ENCODE measurements at regions of chrX and their contacts with region 1.

Region 1: DNA sequence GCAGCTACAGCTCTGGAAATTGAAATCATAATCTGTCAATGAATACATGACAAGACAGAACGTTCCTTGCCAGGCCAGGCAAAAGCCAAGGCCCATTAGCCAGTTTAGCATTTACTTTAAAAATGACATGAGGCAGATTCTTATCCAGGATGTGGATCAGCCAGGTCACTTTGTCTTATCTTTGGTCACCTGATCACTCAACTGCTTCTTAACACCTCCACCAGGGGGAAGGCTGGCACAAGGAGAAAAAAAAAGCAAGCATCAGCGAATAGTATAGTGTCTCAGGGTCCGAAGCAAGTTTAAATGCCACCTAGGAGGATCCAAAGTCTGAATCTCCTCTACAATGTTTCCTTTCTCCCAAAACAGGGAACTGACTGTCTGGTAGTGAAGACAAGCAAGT is 18.8 kb downstream of the ATP1B4 start:
- DNase-seq: peak; percentile 67
- ATAC-seq: peak; percentile 39
- H3K4me3 ChIP-seq: no peak overlapping the region
- H3K4me3 Mint-ChIP-seq: no peak overlapping the region
- H3K27ac ChIP-seq: no peak overlapping the region
- H3K27ac Mint-ChIP-seq: no peak overlapping the region
- H3K4me1 ChIP-seq: peaks cover 0 to 4% of the 10 kb centered on the region in 2 donors
- H3K4me1 Mint-ChIP-seq: peaks cover 2% of the 10 kb centered on the region
- H3K27me3 ChIP-seq: no peaks in the 10 kb centered on the region
- H3K27me3 Mint-ChIP-seq: peaks cover 7% of the 10 kb centered on the region
- CTCF ChIP-seq: peak; percentile 63

Region 2: GRCh38 chrX:120365320-120365719 is 15.4 kb before region 1 on chrX:
- CTCF ChIA-PET with region 1: no interaction called
- POLR2A ChIA-PET with region 1: no interaction called
- intact Hi-C with region 1: no loop called
- DNase-seq: peak; percentile 35
- ATAC-seq: no peak
- H3K4me3 ChIP-seq: no peak overlapping the region
- H3K4me3 Mint-ChIP-seq: no peak overlapping the region
- H3K27ac ChIP-seq: no peak overlapping the region
- H3K27ac Mint-ChIP-seq: no peak overlapping the region
- H3K4me1 ChIP-seq: peaks cover 0 to 2% of the 10 kb centered on the region in 2 donors
- H3K4me1 Mint-ChIP-seq: peaks cover 5% of the 10 kb centered on the region
- H3K27me3 ChIP-seq: peaks cover 0 to 3% (median 0%) of the 10 kb centered on the region in 4 experiments
- H3K27me3 Mint-ChIP-seq: no peaks in the 10 kb centered on the region
- CTCF ChIP-seq: peak; percentile 45

Region 3: GRCh38 chrX:120452131-120452530 is 71.4 kb after region 1 on chrX:
- CTCF ChIA-PET with region 1: interaction called, 22 read pairs
- POLR2A ChIA-PET with region 1: no interaction called
- intact Hi-C with region 1: loop called (anchors 1 kb)
- DNase-seq: peak; percentile 27
- ATAC-seq: no peak
- H3K4me3 ChIP-seq: no peak overlapping the region
- H3K4me3 Mint-ChIP-seq: no peak overlapping the region
- H3K27ac ChIP-seq: no peak overlapping the region
- H3K27ac Mint-ChIP-seq: no peak overlapping the region
- H3K4me1 ChIP-seq: peaks cover 4 to 7% of the 10 kb centered on the region in 2 donors
- H3K4me1 Mint-ChIP-seq: peaks cover 17% of the 10 kb centered on the region
- H3K27me3 ChIP-seq: no peaks in the 10 kb centered on the region
- H3K27me3 Mint-ChIP-seq: no peaks in the 10 kb centered on the region
- CTCF ChIP-seq: no peak

Region 4: GRCh38 chrX:120477453-120477852 is 96.8 kb after region 1 on chrX:
- CTCF ChIA-PET with region 1: interaction called, 11 read pairs
- POLR2A ChIA-PET with region 1: no interaction called
- intact Hi-C with region 1: no loop called
- DNase-seq: no peak
- ATAC-seq: no peak
- H3K4me3 ChIP-seq: no peak overlapping the region
- H3K4me3 Mint-ChIP-seq: no peak overlapping the region
- H3K27ac ChIP-seq: no peak overlapping the region
- H3K27ac Mint-ChIP-seq: no peak overlapping the region
- H3K4me1 ChIP-seq: no peaks in the 10 kb centered on the region
- H3K4me1 Mint-ChIP-seq: no peaks in the 10 kb centered on the region
- H3K27me3 ChIP-seq: no peaks in the 10 kb centered on the region
- H3K27me3 Mint-ChIP-seq: no peaks in the 10 kb centered on the region
- CTCF ChIP-seq: no peak

Measured in B cell (primary cell).